HCT116 (cell line): ENCODE measurements at regions of chr13 and their contacts with region 1.

Region 1: DNA sequence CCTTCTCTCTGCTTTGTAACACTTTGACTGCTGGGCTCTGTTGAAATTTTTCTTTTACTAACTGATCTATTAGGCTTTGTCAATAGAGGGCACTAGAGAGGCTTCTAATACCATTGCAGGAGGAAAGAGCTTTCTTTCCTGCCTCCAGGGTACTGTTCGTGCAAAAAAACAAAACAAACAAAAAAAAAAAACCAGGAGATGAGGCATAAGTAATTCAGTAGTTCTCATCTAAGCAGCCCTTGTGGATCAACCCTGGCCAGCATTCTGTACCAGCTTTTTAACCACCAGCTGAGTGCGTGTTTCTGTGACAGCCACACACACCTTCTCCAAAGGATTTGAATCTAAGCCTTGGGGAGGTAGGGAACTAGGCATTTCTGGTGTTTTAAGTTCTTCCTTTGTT is 1707.6 kb upstream of the SLC10A2 start:
- DNase-seq: peak; percentile 39
- ATAC-seq: peak; percentile 86
- H3K4me3 ChIP-seq: no peak overlapping the region
- H3K27ac ChIP-seq: no peak overlapping the region
- H3K4me1 ChIP-seq: no peaks in the 10 kb centered on the region
- H3K27me3 ChIP-seq: no peaks in the 10 kb centered on the region
- CTCF ChIP-seq: peak; percentile 25 to 73 (median 69); a peak in 5 of 6 replicates
- POLR2A ChIP-seq: no peak
- RAD21 ChIP-seq: peak; percentile 58

Region 2: GRCh38 chr13:103883164-103883563 is 890.6 kb before region 1 on chr13:
- CTCF ChIA-PET with region 1: no interaction called
- POLR2A ChIA-PET with region 1: no interaction called
- RAD21 ChIA-PET with region 1: no interaction called
- intact Hi-C with region 1: loop called (anchors 5 kb)
- DNase-seq: peak; percentile 90
- ATAC-seq: peak; percentile 99
- H3K4me3 ChIP-seq: 0 out of 4 replicates have a peak overlapping the region, but pooled peaks of 1 of the 2 experiments have one; percentile 13
- H3K27ac ChIP-seq: no peak overlapping the region
- H3K4me1 ChIP-seq: peaks cover 0 to 9% of the 10 kb centered on the region in 2 experiments; a peak in 1 of 4 replicates
- H3K27me3 ChIP-seq: no peaks in the 10 kb centered on the region
- CTCF ChIP-seq: peak; percentile 39 to 71 (median 55); a peak in 4 of 6 replicates
- POLR2A ChIP-seq: no peak
- RAD21 ChIP-seq: peak; percentile 91

Region 3: GRCh38 chr13:103976366-103976765 is 797.4 kb before region 1 on chr13:
- CTCF ChIA-PET with region 1: no interaction called
- POLR2A ChIA-PET with region 1: no interaction called
- RAD21 ChIA-PET with region 1: no interaction called
- intact Hi-C with region 1: no loop called
- DNase-seq: no peak
- ATAC-seq: no peak
- H3K4me3 ChIP-seq: no peak overlapping the region
- H3K27ac ChIP-seq: no peak overlapping the region
- H3K4me1 ChIP-seq: peaks cover 4 to 9% of the 10 kb centered on the region in 2 experiments; a peak in 1 of 4 replicates
- H3K27me3 ChIP-seq: no peaks in the 10 kb centered on the region
- CTCF ChIP-seq: no peak
- POLR2A ChIP-seq: no peak
- RAD21 ChIP-seq: no peak

Region 4: DNA sequence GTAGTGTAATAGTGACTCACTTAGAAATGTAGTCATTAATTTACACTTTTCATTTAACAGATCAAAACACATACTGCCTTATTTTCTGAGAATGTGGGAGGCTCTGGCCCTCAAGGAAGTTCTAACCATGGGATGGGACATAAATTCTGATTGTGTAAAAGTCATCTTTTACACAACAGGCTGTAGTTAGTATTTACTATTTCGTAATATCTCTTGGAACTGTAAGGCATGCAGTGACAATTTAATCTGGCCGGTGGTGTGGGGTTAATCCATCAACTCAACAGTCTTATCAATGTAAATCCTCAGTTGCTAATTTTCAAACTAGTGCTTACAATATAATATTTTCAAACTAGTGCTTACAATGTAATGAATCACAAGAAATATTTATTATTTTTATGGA is 162.5 kb after region 1 on chr13:
- CTCF ChIA-PET with region 1: no interaction called
- POLR2A ChIA-PET with region 1: no interaction called
- RAD21 ChIA-PET with region 1: no interaction called
- intact Hi-C with region 1: no loop called
- DNase-seq: no peak
- ATAC-seq: no peak
- H3K4me3 ChIP-seq: no peak overlapping the region
- H3K27ac ChIP-seq: no peak overlapping the region
- H3K4me1 ChIP-seq: no peaks in the 10 kb centered on the region
- H3K27me3 ChIP-seq: no peaks in the 10 kb centered on the region
- CTCF ChIP-seq: no peak
- POLR2A ChIP-seq: no peak
- RAD21 ChIP-seq: no peak

Region 5: GRCh38 chr13:106548064-106548696 is 1774.4 kb after region 1 on chr13:
- CTCF ChIA-PET with region 1: no interaction called
- POLR2A ChIA-PET with region 1: no interaction called
- RAD21 ChIA-PET with region 1: no interaction called
- intact Hi-C with region 1: no loop called
- DNase-seq: no peak
- ATAC-seq: no peak
- H3K4me3 ChIP-seq: no peak overlapping the region
- H3K27ac ChIP-seq: no peak overlapping the region
- H3K4me1 ChIP-seq: no peaks in the 10 kb centered on the region
- H3K27me3 ChIP-seq: no peaks in the 10 kb centered on the region
- CTCF ChIP-seq: no peak
- POLR2A ChIP-seq: no peak
- RAD21 ChIP-seq: no peak